ENCODE measurements at regions of chr7 and their contacts with region 1.

Region 1: DNA sequence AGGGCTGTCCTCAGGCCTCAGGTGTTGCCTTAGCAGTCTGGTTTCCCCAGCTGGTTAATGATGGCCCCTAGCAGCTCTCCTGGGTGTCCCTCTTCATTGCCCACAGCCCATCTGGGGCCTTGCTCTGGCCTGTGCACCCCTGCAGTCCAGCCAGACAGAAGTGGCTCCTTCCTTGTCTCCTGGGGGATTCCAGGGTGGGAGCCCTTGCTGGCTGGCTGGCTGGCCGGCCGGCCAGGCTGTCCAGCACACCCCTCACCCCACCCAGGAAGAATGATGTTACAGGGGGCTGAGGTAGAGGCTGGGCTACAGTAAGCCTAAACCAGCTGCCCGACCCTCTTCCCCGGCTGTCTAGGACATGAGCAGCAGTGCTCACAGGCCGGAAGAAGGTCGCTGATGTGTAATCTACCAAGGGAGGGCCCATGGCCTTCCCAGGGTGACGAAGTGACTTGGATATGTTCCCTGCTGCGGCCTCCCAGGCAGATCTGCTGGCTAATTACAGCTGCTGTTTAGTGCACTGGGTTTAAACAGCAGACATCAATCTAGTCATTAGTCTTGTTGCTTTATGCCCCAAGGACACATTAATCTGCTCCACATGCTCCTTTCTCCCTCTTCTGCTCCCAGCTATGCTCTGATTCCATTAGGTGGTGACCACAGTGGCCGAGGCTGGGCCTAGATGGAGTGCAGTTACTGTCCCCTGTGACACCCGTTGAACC is 53.8 kb upstream of the LRRC4 start:
- DNase-seq: no peak
- ATAC-seq: no peak
- H3K4me3 ChIP-seq: no peak overlapping the region
- H3K27ac ChIP-seq: no peak overlapping the region
- H3K4me1 ChIP-seq: no peaks in the 10 kb centered on the region
- H3K27me3 ChIP-seq: no peaks in the 10 kb centered on the region
- CTCF ChIP-seq: no peak
- POLR2A ChIP-seq: no peak

Region 2: GRCh38 chr7:127865466-127865865 is 219.6 kb before region 1 on chr7:
- in situ Hi-C with region 1: no loop called
- intact Hi-C with region 1: no loop called
- DNase-seq: no peak
- ATAC-seq: no peak
- H3K4me3 ChIP-seq: no peak overlapping the region
- H3K27ac ChIP-seq: no peak overlapping the region
- H3K4me1 ChIP-seq: peaks cover 4 to 7% of the 10 kb centered on the region in 2 donors
- H3K27me3 ChIP-seq: no peaks in the 10 kb centered on the region
- CTCF ChIP-seq: no peak
- POLR2A ChIP-seq: no peak

Region 3: DNA sequence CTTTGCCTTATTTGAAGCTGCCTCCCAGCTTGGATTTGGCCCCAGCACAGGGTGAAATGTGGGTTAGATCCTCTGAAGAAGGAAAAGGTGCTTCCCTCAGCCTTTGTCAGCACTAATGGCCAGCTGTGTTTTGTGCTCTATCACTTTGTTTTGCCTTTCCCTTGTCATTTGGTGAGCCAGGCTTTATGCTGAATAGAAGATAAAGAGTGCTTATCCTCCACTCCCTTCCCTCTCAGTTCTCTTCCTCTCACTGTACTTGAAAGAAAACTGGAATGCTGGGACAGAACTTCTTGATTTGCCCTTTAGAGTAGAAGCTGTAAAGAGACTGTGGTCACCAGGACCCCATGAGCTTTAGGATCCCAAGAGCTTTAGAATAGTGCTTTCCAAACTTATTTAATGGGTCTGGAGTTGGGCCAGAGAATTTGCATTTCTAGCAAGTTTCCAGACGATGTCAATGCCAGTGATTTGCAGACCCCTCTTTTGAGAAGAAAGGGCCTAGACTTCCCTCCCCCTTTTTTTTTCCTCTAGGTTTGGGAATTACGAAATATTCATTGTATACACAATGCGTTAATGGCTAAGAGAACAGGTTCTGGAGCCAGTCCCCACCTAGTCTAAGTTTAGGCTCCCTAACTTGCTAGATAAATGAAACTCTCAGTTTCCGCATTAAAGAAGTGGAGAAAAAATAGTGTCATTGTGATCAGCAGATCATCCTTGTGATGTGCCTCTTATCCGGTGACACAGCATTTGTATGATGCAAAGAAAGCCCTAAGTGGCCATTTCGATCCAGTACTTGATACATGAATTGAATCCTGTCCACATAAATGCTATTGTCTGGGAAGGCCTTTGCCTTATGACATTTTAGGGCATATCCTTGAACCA is 135.1 kb before region 1 on chr7:
- in situ Hi-C with region 1: no loop called
- intact Hi-C with region 1: loop called (anchors 5 kb)
- DNase-seq: no peak
- ATAC-seq: no peak
- H3K4me3 ChIP-seq: no peak overlapping the region
- H3K27ac ChIP-seq: no peak overlapping the region
- H3K4me1 ChIP-seq: no peaks in the 10 kb centered on the region
- H3K27me3 ChIP-seq: no peaks in the 10 kb centered on the region
- CTCF ChIP-seq: no peak
- POLR2A ChIP-seq: no peak